Ovary (tissue), 10 donors: ENCODE measurements at regions of chr1 and their contacts with region 1.

Region 1: GRCh38 chr1:47710329-47711071 is 272.7 kb downstream of the FOXD2 start:
- DNase-seq: peak; percentile 13 to 70 (median 45)
- H3K4me3 ChIP-seq: no peak overlapping the region
- H3K27ac ChIP-seq: no peak overlapping the region
- H3K4me1 ChIP-seq: peaks cover 7% of the 10 kb centered on the region
- H3K27me3 ChIP-seq: no peaks in the 10 kb centered on the region
- CTCF ChIP-seq: peak; percentile 25 to 51 (median 36)
- EP300 ChIP-seq: no peak
- POLR2A ChIP-seq: no peak

Region 2: DNA sequence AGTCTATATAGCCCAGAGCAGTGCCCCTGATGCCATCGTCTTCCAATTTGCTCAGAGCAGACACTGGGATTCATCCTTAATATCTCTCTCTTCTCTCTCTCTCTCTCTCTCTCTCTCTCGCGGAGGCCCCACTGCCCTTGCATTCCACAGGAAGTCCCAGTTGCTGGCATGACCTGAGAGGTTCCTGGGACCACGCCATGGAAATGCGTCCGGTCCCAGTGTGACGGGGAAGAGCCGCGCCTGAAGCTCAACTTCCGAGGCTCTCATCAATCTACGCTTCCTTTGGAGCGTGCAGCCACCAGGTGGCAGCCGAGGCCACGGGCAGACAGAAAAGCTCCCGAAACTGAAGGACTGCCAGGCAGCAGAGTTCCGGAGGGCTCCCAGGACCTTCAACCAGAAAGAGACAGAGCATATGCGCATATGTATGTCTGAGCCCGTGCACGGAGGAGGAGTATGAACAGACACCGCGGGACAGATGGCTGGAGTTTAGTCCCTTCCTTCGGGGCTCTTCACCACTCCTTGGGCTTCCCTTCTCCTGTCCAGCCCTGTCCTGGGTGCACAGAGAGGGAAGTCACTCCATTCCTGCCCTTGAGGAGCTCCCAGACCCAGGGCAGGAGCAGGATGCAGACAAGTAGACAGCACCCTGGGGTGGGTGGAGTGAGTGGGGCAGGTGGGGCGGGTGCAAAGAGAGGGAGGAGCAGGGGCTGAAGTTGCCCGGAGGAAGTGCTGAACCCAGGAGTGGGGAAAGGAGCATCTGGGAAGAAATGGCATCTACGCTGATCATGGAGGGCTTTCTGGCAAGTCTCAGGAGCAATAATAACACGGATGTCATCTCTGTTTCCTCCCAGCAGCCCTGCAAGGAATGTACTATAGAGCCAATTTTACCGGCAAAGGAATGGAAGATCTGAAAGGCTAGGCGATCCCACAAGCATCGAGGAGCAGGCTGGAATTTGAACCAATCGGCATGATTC is 531.2 kb before region 1 on chr1:
- intact Hi-C with region 1: loop called in 1 of 4 experiments (anchors 5 kb)
- DNase-seq: peak; percentile 72 to 90 (median 80)
- H3K4me3 ChIP-seq: peak overlapping the region; percentile 19
- H3K27ac ChIP-seq: no peak overlapping the region
- H3K4me1 ChIP-seq: no peaks in the 10 kb centered on the region
- H3K27me3 ChIP-seq: no peaks in the 10 kb centered on the region
- CTCF ChIP-seq: peak; percentile 47 to 74 (median 62)
- EP300 ChIP-seq: no peak
- POLR2A ChIP-seq: no peak

Region 3: GRCh38 chr1:47192458-47193384 is 517.8 kb before region 1 on chr1:
- intact Hi-C with region 1: loop called in 1 of 4 experiments (anchors 5 kb)
- DNase-seq: peak; percentile 57 to 79 (median 73)
- H3K4me3 ChIP-seq: no peak overlapping the region
- H3K27ac ChIP-seq: no peak overlapping the region
- H3K4me1 ChIP-seq: peaks cover 12% of the 10 kb centered on the region
- H3K27me3 ChIP-seq: no peaks in the 10 kb centered on the region
- CTCF ChIP-seq: peak; percentile 37 to 78 (median 54)
- EP300 ChIP-seq: no peak
- POLR2A ChIP-seq: no peak

Region 4: GRCh38 chr1:47437447-47438164 is 272.9 kb before region 1 on chr1 and contains the start of gene FOXD2:
- intact Hi-C with region 1: loop called in 1 of 4 experiments (anchors 2 kb)
- DNase-seq: peak; percentile 62 to 81 (median 70)
- H3K4me3 ChIP-seq: peak within 1 kb of the TSS; percentile 65
- H3K27ac ChIP-seq: no peak within 1 kb of the TSS
- H3K4me1 ChIP-seq: peaks cover 6% of the 10 kb centered on the region
- H3K27me3 ChIP-seq: no peaks in the 10 kb centered on the region
- CTCF ChIP-seq: peak; percentile 72 to 90 (median 78)
- EP300 ChIP-seq: no peak
- POLR2A ChIP-seq: no peak
- total RNA-seq, gene FOXD2: 0.07 to 0.18 (median 0.09) TPM in 4 of 7 donors, not detected in the others

Region 5: DNA sequence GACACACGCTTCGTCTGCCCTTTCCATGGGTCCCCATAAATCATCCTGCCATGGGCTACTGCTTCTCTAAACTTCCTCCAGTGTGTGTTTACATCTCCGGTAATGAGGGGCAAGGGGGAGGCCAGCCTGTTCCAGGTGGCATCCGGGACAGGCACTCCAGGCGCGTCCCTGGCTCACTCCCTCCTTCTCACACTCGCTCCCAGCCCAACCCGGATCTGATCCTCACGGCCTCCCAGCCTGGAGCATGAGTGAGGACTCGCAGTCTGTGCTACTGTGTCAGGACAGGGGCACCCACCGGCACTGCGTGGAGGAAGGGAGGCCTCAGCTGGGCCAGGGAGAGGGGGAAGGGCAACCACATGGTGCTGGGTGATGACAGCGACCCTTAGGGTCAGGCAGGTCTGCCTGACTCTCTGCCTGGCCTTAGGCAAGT is 61.3 kb after region 1 on chr1:
- intact Hi-C with region 1: no loop called
- DNase-seq: no peak
- H3K4me3 ChIP-seq: no peak overlapping the region
- H3K27ac ChIP-seq: no peak overlapping the region
- H3K4me1 ChIP-seq: no peaks in the 10 kb centered on the region
- H3K27me3 ChIP-seq: no peaks in the 10 kb centered on the region
- CTCF ChIP-seq: no peak
- EP300 ChIP-seq: no peak
- POLR2A ChIP-seq: no peak

Region 6: DNA sequence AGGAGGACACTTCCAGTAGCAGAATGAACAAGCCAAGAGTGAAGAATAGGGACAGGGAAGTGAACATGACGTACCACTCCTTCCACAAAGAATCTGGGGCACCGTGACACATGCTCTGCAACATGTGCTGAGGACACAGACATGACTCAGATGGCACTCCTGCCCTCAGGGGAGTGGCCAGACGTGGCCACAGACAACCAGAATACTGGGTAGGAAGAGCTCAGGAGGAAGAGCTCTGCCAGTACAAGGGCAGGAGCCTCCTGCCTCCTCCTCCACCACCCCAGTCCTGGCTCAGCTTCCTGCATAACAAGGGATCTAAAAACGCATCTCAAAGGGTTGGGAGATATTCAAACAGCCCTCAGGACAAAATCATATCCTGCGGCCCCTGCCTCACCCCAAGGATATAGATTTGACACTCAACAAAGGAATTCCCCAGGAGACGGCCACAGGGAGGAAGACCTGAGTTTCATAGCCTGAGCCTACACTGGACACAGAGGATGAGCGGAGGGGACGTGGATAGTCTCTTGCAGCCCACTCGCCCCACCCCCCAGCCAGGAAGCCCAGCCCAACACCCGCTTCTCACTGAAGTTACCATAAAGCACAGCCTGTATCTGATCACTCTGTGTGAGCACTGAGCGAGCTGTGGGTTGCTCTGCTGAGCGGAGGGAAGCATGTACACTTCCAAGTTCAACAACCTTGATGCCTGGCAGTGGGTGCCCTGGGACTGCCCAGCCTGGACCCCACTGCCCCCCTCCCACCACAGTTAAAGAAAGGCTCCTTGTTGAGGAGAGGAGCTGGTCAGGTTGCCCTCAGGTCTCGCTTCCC is 184.4 kb after region 1 on chr1:
- intact Hi-C with region 1: no loop called
- DNase-seq: no peak
- H3K4me3 ChIP-seq: no peak overlapping the region
- H3K27ac ChIP-seq: no peak overlapping the region
- H3K4me1 ChIP-seq: no peaks in the 10 kb centered on the region
- H3K27me3 ChIP-seq: no peaks in the 10 kb centered on the region
- CTCF ChIP-seq: no peak
- EP300 ChIP-seq: no peak
- POLR2A ChIP-seq: no peak